Activated naive CD8-positive, alpha-beta T cell treated with anti-CD3 and anti-CD28 coated beads, Interleukin-2, amount 10 ng/mL, durations not matched to agents 7 days and 5 days (primary cell): ENCODE measurements at regions of chr12 and their contacts with region 1.

Region 1: DNA sequence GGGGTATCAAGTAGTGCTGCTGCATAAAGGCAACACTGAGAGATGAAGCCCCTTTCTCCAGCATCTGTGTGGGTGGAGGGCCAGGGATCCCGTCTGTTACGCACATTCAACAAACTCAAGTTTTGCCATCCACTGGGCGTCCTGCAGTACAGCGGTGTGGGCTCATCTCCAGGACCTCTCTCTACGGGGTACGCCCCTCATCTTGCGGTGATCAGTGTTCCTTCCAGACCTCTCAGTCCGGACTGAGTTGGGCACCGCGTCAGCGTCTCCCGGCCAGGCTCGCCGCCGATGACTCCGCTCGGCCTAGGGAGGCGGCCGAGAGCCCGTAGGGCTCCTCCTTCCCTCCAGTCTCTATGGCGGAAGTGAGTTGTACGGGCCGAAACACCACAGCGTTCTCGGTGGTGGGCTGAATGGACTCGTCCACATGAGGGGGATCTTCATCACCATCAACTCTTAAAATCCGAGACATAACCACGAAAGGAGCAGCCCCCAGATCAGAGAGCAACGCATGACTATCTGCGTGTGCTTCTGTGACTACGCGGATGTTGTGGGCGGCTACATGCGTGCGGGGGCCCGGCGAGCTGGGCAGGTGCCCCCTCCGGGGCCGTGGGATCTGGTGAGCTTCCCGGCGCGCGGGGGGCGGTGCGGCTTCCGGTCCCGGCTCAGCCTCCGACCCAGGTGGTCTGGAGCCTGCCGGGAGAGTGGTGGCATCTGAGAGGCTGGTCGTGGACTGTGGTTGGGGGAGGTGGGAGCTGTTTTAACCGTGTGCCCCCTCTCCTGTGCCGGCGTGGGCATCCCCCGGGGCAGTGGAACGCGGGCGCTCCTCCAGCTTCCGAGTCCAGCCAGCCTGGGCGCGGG is at the start of gene ATG101:
- DNase-seq: peak; percentile 91
- ATAC-seq: peak; percentile 94
- H3K4me3 Mint-ChIP-seq: peak within 1 kb of the TSS; percentile 94
- H3K27ac Mint-ChIP-seq: peak within 1 kb of the TSS; percentile 99
- H3K4me1 Mint-ChIP-seq: peaks cover 48% of the 10 kb centered on the region
- H3K27me3 Mint-ChIP-seq: peaks cover 3% of the 10 kb centered on the region
- total RNA-seq, gene ATG101: 25.2 to 28.8 TPM

Region 2: GRCh38 chr12:52050761-52051541 is 18.6 kb before region 1 on chr12 and contains the start of gene NR4A1:
- POLR2A ChIA-PET with region 1: interaction called, 63 read pairs
- DNase-seq: peak; percentile 100
- ATAC-seq: peak; percentile 80
- H3K4me3 Mint-ChIP-seq: peak within 1 kb of the TSS; percentile 99
- H3K27ac Mint-ChIP-seq: peak within 1 kb of the TSS; percentile 99
- H3K4me1 Mint-ChIP-seq: peaks cover 38% of the 10 kb centered on the region
- H3K27me3 Mint-ChIP-seq: peaks cover 2% of the 10 kb centered on the region
- total RNA-seq, gene NR4A1: 8.6 to 8.8 TPM

Region 3: DNA sequence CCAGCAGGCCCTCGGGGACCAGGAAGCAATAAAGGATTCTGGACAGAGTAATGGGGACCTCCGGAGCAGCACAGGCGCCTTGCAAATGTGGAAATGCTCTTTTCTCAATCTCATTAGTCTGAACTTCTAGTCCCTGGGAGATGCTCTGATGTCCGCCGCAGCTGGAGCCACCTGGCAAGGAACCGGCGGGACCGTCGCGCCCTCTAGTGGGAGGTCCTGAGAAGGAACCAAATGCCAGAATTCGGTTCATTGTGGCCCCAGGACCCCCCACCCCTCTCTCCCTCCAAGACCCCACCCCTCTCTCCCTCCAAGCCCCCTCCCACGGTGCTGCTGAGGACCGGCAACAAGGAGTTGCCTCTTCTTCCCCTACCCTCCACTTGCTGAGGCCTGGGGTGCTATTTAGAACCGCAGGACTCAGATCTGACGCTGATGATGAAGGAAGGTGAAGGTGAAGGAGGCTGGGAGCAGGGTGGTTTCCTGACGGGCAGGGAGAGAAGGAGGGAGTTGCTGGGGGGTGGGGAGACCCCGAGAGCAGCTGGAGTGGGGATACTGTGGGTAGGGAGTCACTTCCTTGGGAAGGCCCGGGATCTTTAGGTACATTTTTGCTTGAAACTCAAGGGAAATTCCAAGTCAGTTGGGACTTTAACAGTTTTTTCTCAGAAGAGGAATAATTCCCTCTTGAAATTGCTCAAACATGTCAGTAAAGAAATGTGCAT is 52.4 kb after region 1 on chr12:
- POLR2A ChIA-PET with region 1: no interaction called
- DNase-seq: peak; percentile 76
- ATAC-seq: peak; percentile 44
- H3K4me3 Mint-ChIP-seq: no peak overlapping the region
- H3K27ac Mint-ChIP-seq: no peak overlapping the region
- H3K4me1 Mint-ChIP-seq: peaks cover 21% of the 10 kb centered on the region
- H3K27me3 Mint-ChIP-seq: peaks cover 13% of the 10 kb centered on the region

Region 4: GRCh38 chr12:52147367-52147972 is 77.9 kb after region 1 on chr12:
- POLR2A ChIA-PET with region 1: no interaction called
- DNase-seq: no peak
- ATAC-seq: no peak
- H3K4me3 Mint-ChIP-seq: no peak overlapping the region
- H3K27ac Mint-ChIP-seq: no peak overlapping the region
- H3K4me1 Mint-ChIP-seq: peaks cover 8% of the 10 kb centered on the region
- H3K27me3 Mint-ChIP-seq: peaks cover 5% of the 10 kb centered on the region

Region 5: GRCh38 chr12:52351196-52352059 is 281.9 kb after region 1 on chr12:
- POLR2A ChIA-PET with region 1: no interaction called
- DNase-seq: no peak
- ATAC-seq: peak; percentile 85
- H3K4me3 Mint-ChIP-seq: peak overlapping the region; percentile 53
- H3K27ac Mint-ChIP-seq: no peak overlapping the region
- H3K4me1 Mint-ChIP-seq: peaks cover 14% of the 10 kb centered on the region
- H3K27me3 Mint-ChIP-seq: peaks cover 31% of the 10 kb centered on the region